T-cell (primary cell): ENCODE measurements at regions of chr12 and their contacts with region 1.

Region 1: DNA sequence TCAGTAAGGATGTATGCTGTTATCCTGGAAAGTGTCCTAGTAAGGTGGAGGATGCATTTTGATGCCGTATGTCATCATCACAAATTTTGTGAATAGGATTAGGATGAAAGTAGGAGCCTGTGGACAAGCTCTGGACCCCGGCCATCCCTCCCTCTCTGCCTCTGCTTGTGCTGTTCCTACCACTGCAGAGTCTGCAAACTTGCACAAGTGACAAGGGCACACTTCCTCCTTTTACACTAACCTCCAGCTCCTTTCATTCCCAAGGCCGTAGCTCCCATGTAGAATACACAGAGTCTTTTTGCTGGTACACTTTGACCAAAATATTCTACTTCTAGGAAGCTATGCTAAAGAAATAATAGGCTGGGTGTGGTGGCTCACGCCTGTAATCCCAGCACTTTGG is 13.3 kb upstream of the TMCC3 start:
- DNase-seq: no peak
- ATAC-seq: no peak
- H3K4me3 ChIP-seq: no peak overlapping the region
- H3K4me3 Mint-ChIP-seq: no peak overlapping the region
- H3K27ac ChIP-seq: no peak overlapping the region
- H3K27ac Mint-ChIP-seq: no peak overlapping the region
- H3K4me1 ChIP-seq: no peaks in the 10 kb centered on the region
- H3K4me1 Mint-ChIP-seq: no peaks in the 10 kb centered on the region
- H3K27me3 ChIP-seq: peaks cover 0 to 4% of the 10 kb centered on the region in 2 experiments
- H3K27me3 Mint-ChIP-seq: peaks cover 2 to 5% of the 10 kb centered on the region in 2 donors

Region 2: DNA sequence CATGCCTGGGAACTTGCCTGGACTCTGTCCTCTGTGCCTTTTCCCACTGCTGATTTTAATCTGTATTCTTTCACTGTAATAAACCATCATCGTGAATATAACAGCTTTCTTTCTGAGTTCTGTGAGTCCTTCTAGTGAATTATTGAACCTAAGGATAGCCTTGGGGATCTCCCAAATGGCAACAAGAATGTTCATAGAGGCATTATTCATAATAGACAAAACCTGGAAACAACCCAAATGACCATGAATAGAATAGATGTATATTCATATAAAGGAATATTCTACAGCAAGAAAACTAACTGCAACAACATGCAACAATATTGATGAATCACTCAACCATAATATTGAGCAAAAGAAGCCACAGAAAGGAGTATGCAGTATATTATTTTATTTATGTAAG is 159.3 kb before region 1 on chr12:
- CTCF ChIA-PET with region 1: no interaction called
- POLR2A ChIA-PET with region 1: interaction called in 1 of 2 experiments, 16 read pairs
- DNase-seq: no peak
- ATAC-seq: no peak
- H3K4me3 ChIP-seq: no peak overlapping the region
- H3K4me3 Mint-ChIP-seq: no peak overlapping the region
- H3K27ac ChIP-seq: no peak overlapping the region
- H3K27ac Mint-ChIP-seq: no peak overlapping the region
- H3K4me1 ChIP-seq: no peaks in the 10 kb centered on the region
- H3K4me1 Mint-ChIP-seq: no peaks in the 10 kb centered on the region
- H3K27me3 ChIP-seq: peaks cover 0 to 6% of the 10 kb centered on the region in 2 experiments
- H3K27me3 Mint-ChIP-seq: peaks cover 0 to 2% of the 10 kb centered on the region in 2 donors

Region 3: GRCh38 chr12:94710933-94711332 is 47.2 kb after region 1 on chr12:
- CTCF ChIA-PET with region 1: no interaction called
- POLR2A ChIA-PET with region 1: interaction called in 1 of 2 experiments, 22 read pairs
- DNase-seq: peak in 19 of 35 experiments; percentile 1 to 41 (median 10)
- ATAC-seq: peak in 1 of 4 experiments; percentile 44
- H3K4me3 ChIP-seq: no peak overlapping the region
- H3K4me3 Mint-ChIP-seq: no peak overlapping the region
- H3K27ac ChIP-seq: no peak overlapping the region
- H3K27ac Mint-ChIP-seq: no peak overlapping the region
- H3K4me1 ChIP-seq: no peaks in the 10 kb centered on the region
- H3K4me1 Mint-ChIP-seq: no peaks in the 10 kb centered on the region
- H3K27me3 ChIP-seq: peaks cover 0 to 2% of the 10 kb centered on the region in 2 experiments
- H3K27me3 Mint-ChIP-seq: peaks cover 0 to 1% of the 10 kb centered on the region in 2 donors